HAP-1 (cell line): ENCODE measurements at regions of chr6 and their contacts with region 1.

Region 1: GRCh38 chr6:82270881-82271645 is 23.5 kb upstream of the IBTK start:
- DNase-seq: peak in 1 of 2 experiments; percentile 72
- H3K4me3 ChIP-seq: no peak overlapping the region
- H3K4me1 ChIP-seq: no peaks in the 10 kb centered on the region
- H3K27me3 ChIP-seq: no peaks in the 10 kb centered on the region

Region 2: DNA sequence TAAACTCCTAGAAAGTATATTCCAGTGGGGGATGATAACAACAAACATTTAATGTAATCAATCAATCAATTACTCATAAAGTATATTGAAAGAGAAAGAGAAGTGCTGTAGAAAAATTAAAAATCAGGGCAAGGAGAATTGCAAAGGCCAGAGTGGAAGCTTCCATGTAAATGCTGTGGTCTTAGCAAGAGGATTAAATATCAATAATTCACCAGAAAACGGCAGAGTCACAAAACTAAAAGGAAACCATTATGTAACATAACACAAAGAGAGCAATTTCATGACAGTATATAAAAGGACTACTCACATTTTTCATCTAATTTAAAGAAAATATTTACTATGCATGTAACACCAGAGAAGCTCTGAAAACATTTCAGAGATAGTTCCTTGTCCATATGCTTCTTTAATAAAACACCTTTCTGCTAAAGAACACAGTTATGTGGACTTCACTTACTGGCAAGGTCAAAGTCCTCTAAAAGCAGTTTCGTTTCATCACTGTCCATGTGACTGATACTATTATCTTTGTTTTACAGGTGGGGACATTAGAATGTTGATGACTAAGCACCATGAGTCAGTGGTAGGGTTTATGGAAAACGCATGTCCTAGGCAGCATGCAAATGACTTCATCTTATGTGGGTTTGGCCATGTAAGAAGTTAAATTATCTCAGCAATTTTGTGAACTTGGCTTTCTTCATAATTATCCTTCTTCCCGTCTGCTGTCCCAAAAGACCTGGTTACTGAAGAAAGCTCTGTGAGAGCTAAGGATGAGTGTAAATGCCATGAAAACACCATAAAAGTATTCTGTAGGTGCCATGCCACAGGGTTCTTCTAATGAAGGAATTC is 332.8 kb before region 1 on chr6:
- in situ Hi-C with region 1: no loop called
- DNase-seq: no peak
- H3K4me3 ChIP-seq: no peak overlapping the region
- H3K4me1 ChIP-seq: peaks cover 8% of the 10 kb centered on the region; the same call in 1 of the 2 replicates
- H3K27me3 ChIP-seq: no peaks in the 10 kb centered on the region

Region 3: GRCh38 chr6:82363351-82364086 is 92.5 kb after region 1 on chr6 and contains the start of gene TPBG:
- in situ Hi-C with region 1: no loop called
- DNase-seq: peak; percentile 65 to 85
- H3K4me3 ChIP-seq: peak within 1 kb of the TSS; percentile 68
- H3K4me1 ChIP-seq: peaks cover 13% of the 10 kb centered on the region
- H3K27me3 ChIP-seq: no peaks in the 10 kb centered on the region

Region 4: DNA sequence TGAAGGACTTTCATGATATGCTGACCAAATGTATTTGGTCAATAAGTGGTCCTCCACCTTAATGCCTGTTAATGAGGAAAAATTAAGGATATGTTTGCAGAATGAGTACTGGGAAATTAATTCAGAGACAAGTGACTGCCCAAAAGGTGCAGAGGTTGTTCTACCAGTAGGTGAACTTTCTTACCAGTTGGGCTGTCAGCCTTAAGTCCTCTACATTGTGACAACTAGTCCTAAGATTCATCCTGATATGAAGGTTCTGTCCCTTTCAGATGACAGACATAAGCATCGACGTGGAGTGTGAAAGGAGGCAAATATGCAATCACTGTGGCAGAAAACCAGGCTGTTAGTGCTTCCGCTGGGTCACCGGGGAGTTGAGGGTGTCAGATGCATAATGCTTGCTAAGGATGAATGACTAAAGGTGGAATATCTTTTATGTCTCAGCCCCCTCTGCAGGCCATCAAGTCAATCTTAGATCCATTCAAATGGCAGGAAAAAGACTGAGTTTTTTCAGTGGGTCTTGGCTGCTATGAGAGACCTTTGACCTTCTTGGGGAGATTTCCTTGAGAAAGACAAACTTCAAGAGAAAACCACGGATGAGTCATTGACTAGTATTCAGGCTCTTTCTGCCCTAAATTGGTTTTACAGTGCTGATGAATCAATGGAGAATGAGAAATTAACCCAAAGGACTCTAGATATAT is 318.6 kb after region 1 on chr6:
- in situ Hi-C with region 1: loop called (anchors 25 kb)
- DNase-seq: peak; percentile 38 to 49
- H3K4me3 ChIP-seq: no peak overlapping the region
- H3K4me1 ChIP-seq: no peaks in the 10 kb centered on the region
- H3K27me3 ChIP-seq: 0 out of 2 replicates have a peak, but pooled peaks cover 6% of the 10 kb centered on the region

Region 5: DNA sequence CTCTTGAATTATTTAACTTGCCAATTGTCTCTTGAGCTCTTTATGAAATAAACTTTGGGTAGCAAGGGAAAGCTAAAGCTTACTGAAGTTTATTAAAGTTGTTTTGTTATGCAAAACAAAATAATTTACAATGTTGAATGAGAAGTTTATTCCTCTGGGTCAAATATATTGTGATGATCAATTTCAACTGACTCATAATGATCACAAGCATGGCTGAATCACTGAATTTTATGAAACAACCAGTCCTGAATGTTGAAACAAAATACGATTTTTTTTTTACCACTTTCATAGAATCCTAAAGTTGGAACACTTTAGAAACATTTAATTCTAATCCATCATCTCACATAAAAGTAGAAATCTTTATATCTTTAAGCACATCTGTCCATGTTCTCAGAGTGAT is 1032.4 kb after region 1 on chr6:
- in situ Hi-C with region 1: no loop called
- DNase-seq: no peak
- H3K4me3 ChIP-seq: no peak overlapping the region
- H3K4me1 ChIP-seq: no peaks in the 10 kb centered on the region
- H3K27me3 ChIP-seq: no peaks in the 10 kb centered on the region